ENCODE measurements at regions of chr2 and their contacts with region 1.

Region 1: GRCh38 chr2:177239932-177240630 is 24.4 kb downstream of the NFE2L2 start:
- DNase-seq: peak; percentile 61
- H3K4me3 Mint-ChIP-seq: no peak overlapping the region
- H3K27ac Mint-ChIP-seq: peak overlapping the region; percentile 83
- H3K4me1 Mint-ChIP-seq: peaks cover 82% of the 10 kb centered on the region
- H3K27me3 Mint-ChIP-seq: no peaks in the 10 kb centered on the region

Region 2: DNA sequence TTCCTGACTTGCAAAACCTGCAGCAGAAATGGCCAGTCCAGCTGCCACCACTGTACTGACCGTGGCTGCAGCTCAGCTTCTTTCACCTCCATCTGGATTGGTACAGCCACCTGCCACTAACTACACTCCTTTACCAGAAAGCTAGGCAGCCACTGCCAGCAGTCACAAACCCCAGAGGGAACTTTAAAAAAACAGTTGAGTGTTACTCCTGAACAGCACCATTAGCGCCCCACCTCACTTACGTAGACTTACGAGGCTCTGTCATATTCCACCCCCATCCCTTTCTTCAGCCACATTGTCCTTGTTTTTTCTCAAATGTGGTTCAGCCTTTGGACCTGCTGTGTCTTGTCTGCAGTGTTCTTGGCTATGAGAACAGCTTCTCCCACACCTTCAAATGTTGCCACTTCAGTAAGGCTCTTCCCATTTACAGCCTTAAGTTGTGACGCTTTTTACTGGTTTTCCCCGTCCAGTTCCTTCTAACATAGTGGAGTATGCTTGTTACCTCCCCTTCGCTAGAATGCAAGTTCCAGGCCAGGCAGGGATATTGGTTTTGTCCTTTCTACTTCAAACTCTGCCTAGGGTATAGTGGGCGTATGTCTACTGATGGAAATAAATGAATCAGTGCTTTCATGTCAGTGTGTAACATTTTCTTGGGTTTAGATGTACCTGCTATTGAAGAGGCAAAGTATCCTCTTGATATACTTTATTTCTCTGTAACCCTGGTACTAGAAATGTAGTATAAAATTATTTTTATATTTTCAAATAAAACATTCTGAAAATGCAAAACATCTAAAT is 10.4 kb before region 1 on chr2:
- CTCF ChIA-PET with region 1: interaction called, 3 read pairs
- POLR2A ChIA-PET with region 1: interaction called, 6 read pairs
- intact Hi-C with region 1: loop called (anchors 1 kb)
- DNase-seq: no peak
- H3K4me3 Mint-ChIP-seq: no peak overlapping the region
- H3K27ac Mint-ChIP-seq: peak overlapping the region; percentile 77
- H3K4me1 Mint-ChIP-seq: peaks cover 55% of the 10 kb centered on the region
- H3K27me3 Mint-ChIP-seq: no peaks in the 10 kb centered on the region

Region 3: DNA sequence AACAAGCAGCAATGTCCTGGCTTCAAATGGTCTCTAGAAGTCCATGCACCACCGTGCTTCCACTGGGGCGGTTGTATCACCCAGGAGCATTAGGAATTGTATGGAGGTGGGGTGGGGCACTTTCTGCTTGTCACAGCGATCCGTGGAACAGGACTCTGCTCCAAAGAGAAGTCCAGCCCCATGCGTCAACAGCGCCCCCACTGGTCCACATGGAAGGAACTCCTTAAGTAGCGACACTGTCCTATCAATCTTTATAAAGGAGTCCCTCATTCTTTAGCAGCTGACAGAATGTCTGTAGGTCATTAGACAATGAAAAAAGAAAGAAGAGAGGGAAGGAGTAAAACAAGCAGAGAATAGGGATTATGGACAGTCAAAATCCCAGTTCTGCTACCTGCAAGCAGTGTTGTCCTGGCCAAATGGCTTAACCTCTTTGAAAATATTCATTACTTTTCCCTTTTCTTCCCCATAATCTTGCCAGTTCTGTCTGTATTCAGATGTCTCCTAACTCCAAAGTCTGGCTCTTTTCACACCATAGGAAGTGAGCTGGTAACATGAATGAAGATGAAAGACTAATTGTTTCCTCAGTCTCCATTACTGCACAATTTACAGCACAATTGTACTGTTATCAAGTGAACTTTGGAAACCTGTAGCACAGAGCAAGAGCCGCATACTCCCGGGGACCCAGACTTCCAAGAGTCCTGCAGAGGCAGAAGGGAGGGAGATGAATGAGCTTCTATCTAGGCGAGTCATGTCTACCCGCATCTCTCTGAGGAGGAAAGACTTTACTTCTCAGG is 14.5 kb after region 1 on chr2:
- CTCF ChIA-PET with region 1: interaction called, 3 read pairs
- POLR2A ChIA-PET with region 1: interaction called, 7 read pairs
- intact Hi-C with region 1: loop called (anchors 1 kb)
- DNase-seq: peak; percentile 42
- H3K4me3 Mint-ChIP-seq: no peak overlapping the region
- H3K27ac Mint-ChIP-seq: peak overlapping the region; percentile 40
- H3K4me1 Mint-ChIP-seq: peaks cover 91% of the 10 kb centered on the region
- H3K27me3 Mint-ChIP-seq: no peaks in the 10 kb centered on the region